Cardiac septum (tissue), 1 donor: ENCODE measurements at regions of chr4 and their contacts with region 1.

Region 1: GRCh38 chr4:71074452-71075299 is 81.2 kb downstream of the DCK start:
- DNase-seq: no peak

Region 2: DNA sequence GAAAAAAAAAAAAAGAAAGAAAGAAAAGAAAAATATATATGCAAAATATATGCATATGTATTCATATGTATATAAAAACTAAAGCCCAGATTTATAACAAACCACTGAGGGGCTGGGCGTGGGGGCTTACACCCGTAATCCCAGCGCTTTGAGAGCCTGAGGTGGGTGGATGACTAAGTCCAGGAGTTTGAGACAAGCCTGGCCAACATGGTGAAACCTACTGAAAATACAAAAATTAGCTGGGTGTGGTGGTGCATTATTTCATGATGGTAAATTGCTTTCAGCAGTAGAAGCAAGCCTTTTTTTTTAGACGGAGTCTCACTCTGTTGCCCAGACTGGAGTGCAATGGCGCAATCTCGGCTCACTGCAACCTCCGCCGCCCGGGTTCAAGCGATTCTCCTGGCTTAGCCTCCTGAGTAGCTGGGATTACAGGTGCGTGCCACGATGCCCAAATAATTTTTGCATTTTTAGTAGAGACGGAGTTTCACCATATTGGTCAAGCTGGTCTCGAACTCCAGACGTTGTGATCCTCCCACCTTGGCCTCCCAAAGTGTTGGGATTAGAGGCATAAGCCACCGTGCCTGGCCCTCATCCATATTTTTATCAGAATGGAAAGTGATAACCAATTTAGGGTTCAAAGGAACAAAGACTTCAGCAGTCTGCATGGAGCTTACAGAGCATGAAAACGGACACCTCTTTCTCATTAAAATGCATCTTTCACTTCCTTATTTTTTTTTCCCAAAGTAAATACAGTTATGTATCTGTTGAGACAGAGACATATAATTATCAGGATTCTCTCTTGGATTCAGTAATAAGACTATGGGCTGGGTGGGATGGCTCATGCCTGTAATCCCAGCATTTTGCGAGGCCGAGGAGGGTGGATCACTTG is 200.2 kb before region 1 on chr4:
- intact Hi-C with region 1: no loop called
- DNase-seq: no peak

Region 3: DNA sequence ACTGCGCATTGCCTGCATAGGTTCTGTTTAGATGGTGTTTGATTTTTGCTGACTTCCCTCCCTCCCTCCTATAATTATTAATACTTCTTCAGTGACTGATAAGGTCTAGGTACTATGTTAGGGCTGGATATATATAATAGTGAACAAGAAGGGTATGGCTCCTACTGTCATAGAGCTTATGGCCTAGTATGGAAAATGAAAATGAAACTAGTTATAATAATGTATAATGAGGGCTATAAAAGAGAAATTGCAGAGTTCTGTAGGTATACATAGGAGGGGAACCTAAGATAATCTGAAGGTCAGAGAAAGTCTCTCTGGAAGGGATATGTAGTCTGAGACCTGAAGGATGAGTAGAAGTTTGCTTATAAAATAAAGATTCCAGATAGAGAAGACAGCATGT is 20.9 kb after region 1 on chr4:
- intact Hi-C with region 1: loop called (anchors 2 kb)
- DNase-seq: no peak

Region 4: GRCh38 chr4:71259911-71260331 is 185.2 kb after region 1 on chr4:
- intact Hi-C with region 1: loop called (anchors 10 kb)
- DNase-seq: no peak

Region 5: DNA sequence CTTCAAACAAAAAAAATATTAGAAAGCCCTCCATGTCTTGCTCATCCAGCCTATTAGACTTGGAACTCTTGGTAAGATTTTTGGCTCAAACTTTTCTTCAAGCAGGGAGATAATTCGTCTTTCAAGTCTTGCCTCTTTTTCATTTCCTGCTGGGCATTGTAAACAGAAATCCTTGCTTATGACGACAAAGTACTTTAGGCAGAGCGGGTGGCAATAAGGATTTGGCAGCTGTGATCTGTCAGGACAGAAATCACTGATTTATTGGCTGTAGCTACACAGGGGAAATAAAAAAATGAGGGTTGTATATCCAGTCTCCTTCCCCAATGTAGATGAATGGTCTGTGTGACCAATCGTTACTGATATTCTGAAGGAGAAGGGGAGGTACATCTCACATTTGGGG is 385.7 kb after region 1 on chr4:
- intact Hi-C with region 1: no loop called
- DNase-seq: no peak

Region 6: GRCh38 chr4:72935462-72935861 is 1860.8 kb after region 1 on chr4:
- intact Hi-C with region 1: no loop called
- DNase-seq: no peak